ENCODE measurements at regions of chr10 and their contacts with region 1.

Region 1: GRCh38 chr10:52818019-52818418 is 45.4 kb upstream of the MBL2 start:
- DNase-seq: peak; percentile 37
- ATAC-seq: peak; percentile 96
- H3K4me3 ChIP-seq: no peak overlapping the region
- H3K27ac ChIP-seq: no peak overlapping the region
- H3K4me1 ChIP-seq: no peaks in the 10 kb centered on the region
- H3K27me3 ChIP-seq: no peaks in the 10 kb centered on the region; a peak in 1 of 4 replicates
- CTCF ChIP-seq: peak; percentile 57 to 71 (median 68); a peak in 5 of 6 replicates
- EP300 ChIP-seq: no peak
- POLR2A ChIP-seq: no peak
- RAD21 ChIP-seq: peak; percentile 56

Region 2: DNA sequence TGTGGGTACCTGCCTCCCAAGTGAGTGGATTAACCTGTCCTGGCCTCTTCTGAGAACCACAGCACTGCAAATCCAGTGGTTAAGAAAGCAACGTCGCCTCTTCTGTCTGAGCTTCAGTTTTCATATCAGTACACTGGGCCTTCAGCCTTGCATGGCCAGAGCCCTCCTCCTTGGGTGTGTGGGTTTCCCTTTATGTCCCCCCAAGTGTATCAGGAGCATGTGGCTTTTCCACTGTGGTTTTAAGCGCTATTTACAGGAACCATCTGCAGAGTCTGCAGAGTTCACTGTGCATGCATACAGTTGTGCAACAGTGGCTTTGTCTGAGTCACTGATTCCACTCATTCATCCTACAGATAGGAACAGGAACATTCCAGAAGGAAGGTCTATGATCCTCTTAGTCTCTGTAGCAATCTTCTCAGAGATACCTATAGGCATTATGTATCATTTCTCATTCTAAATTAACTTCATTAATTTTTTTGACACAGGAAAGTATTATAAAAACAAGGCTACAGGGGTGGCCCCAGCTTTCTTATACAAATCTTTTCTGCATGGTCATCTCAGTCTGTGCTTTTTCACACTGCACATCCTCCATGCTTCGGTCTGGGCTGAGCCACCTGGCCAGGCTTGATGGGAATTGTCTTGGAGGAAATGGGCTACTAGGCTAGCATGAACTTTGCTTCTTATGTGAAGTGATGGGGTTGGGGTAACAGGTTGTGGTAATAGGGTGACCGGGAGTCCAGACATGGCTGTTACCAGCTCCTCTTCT is 62.5 kb before region 1 on chr10:
- CTCF ChIA-PET with region 1: no interaction called
- POLR2A ChIA-PET with region 1: no interaction called
- RAD21 ChIA-PET with region 1: no interaction called
- SMC1A ChIA-PET with region 1: no interaction called
- in situ Hi-C with region 1: no loop called
- intact Hi-C with region 1: no loop called
- DNase-seq: no peak
- ATAC-seq: no peak
- H3K4me3 ChIP-seq: no peak overlapping the region
- H3K27ac ChIP-seq: no peak overlapping the region
- H3K4me1 ChIP-seq: no peaks in the 10 kb centered on the region
- H3K27me3 ChIP-seq: no peaks in the 10 kb centered on the region
- CTCF ChIP-seq: no peak
- EP300 ChIP-seq: no peak
- POLR2A ChIP-seq: no peak
- RAD21 ChIP-seq: no peak

Region 3: DNA sequence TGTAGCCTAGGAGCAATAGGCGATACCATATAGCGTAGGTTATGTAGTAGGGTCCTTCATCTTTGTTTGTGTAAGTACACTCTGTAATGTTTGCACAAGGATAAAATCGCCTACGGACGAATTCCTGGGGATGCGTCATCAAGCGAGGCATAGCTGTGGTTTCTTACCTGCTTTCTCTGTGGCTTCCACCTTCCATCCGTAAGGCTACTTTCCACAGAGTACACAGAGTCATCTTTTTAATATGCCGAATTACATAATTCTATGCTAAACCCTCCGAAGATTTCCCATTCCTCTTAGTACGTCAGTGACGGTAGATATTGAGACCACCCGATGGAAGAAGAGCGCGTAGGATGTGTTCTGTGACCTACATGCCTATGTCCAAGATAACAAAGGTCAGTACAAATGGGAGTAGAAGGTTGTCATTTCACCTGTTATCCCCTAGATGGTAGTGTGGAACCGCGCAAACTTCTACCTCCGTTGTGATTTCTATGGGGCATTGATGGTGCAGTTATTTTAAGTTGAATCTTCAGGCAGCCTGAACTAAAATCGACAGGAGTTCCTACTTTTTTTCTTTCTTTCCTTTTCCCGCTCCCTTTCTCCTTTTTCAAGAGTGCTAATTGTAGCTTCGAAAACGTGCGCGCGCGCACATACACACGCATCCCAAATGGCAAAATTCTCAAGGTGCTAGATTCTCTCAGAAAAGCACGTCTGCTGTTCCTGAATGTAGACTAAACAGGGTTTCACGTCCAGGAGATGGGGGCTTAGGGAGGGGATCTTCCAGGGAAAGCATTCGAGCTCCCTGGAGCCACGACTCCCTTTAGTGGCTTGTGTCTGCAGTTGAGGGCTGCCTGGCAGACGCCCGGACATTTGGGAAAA is 66.2 kb after region 1 on chr10:
- CTCF ChIA-PET with region 1: interaction called, 11 read pairs
- POLR2A ChIA-PET with region 1: no interaction called
- RAD21 ChIA-PET with region 1: interaction called, 3 read pairs
- SMC1A ChIA-PET with region 1: interaction called, 6 read pairs
- in situ Hi-C with region 1: no loop called
- intact Hi-C with region 1: loop called (anchors 1 kb)
- DNase-seq: peak; percentile 25
- ATAC-seq: peak; percentile 95
- H3K4me3 ChIP-seq: no peak overlapping the region
- H3K27ac ChIP-seq: no peak overlapping the region
- H3K4me1 ChIP-seq: no peaks in the 10 kb centered on the region
- H3K27me3 ChIP-seq: no peaks in the 10 kb centered on the region; a peak in 1 of 4 replicates
- CTCF ChIP-seq: peak; percentile 78 to 84 (median 83)
- EP300 ChIP-seq: no peak
- POLR2A ChIP-seq: no peak
- RAD21 ChIP-seq: peak; percentile 90

Region 4: GRCh38 chr10:52933748-52934147 is 115.7 kb after region 1 on chr10:
- CTCF ChIA-PET with region 1: interaction called, 3 read pairs
- POLR2A ChIA-PET with region 1: no interaction called
- RAD21 ChIA-PET with region 1: no interaction called
- SMC1A ChIA-PET with region 1: no interaction called
- in situ Hi-C with region 1: no loop called
- intact Hi-C with region 1: loop called (anchors 5 kb)
- DNase-seq: no peak
- ATAC-seq: no peak
- H3K4me3 ChIP-seq: no peak overlapping the region
- H3K27ac ChIP-seq: no peak overlapping the region
- H3K4me1 ChIP-seq: no peaks in the 10 kb centered on the region
- H3K27me3 ChIP-seq: no peaks in the 10 kb centered on the region; a peak in 2 of 4 replicates
- CTCF ChIP-seq: no peak
- EP300 ChIP-seq: no peak
- POLR2A ChIP-seq: no peak
- RAD21 ChIP-seq: no peak

Region 5: GRCh38 chr10:52979295-52979990 is 161.4 kb after region 1 on chr10:
- CTCF ChIA-PET with region 1: no interaction called
- POLR2A ChIA-PET with region 1: no interaction called
- RAD21 ChIA-PET with region 1: no interaction called
- SMC1A ChIA-PET with region 1: no interaction called
- in situ Hi-C with region 1: no loop called
- intact Hi-C with region 1: no loop called
- DNase-seq: no peak
- ATAC-seq: no peak
- H3K4me3 ChIP-seq: no peak overlapping the region
- H3K27ac ChIP-seq: no peak overlapping the region
- H3K4me1 ChIP-seq: no peaks in the 10 kb centered on the region
- H3K27me3 ChIP-seq: no peaks in the 10 kb centered on the region
- CTCF ChIP-seq: no peak
- EP300 ChIP-seq: no peak
- POLR2A ChIP-seq: no peak
- RAD21 ChIP-seq: no peak